SK-N-SH (cell line): ENCODE measurements at regions of chr4 and their contacts with region 1.

Region 1: GRCh38 chr4:116197317-116197809 is 888.0 kb downstream of the TRAM1L1 start:
- DNase-seq: no peak
- H3K4me3 ChIP-seq: no peak overlapping the region
- H3K27ac ChIP-seq: no peak overlapping the region
- H3K4me1 ChIP-seq: no peaks in the 10 kb centered on the region; a peak in 1 of 4 replicates
- H3K27me3 ChIP-seq: no peaks in the 10 kb centered on the region
- CTCF ChIP-seq: no peak
- EP300 ChIP-seq: no peak
- RAD21 ChIP-seq: no peak

Region 2: DNA sequence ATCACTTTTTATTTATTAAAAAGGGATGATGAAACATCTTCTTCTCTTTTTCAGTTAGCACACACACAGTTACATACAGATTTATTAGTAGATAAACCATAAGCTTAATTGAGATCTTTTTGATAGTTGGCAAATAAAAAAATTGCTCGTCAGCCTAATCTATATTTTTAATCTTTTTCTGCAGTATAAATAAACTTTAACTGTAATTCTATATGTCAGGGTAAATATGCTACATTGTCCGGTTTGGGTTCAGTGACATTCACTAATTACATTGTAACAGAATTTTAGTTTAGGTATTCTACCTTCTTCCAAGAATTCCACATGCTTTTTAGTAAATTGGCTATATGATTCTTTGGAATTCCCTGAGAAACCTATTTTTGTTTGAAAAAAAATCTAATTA is 401.2 kb before region 1 on chr4:
- CTCF ChIA-PET with region 1: no interaction called
- POLR2A ChIA-PET with region 1: no interaction called
- DNase-seq: no peak
- H3K4me3 ChIP-seq: no peak overlapping the region
- H3K27ac ChIP-seq: no peak overlapping the region
- H3K4me1 ChIP-seq: no peaks in the 10 kb centered on the region
- H3K27me3 ChIP-seq: no peaks in the 10 kb centered on the region
- CTCF ChIP-seq: no peak
- EP300 ChIP-seq: no peak
- RAD21 ChIP-seq: no peak

Region 3: DNA sequence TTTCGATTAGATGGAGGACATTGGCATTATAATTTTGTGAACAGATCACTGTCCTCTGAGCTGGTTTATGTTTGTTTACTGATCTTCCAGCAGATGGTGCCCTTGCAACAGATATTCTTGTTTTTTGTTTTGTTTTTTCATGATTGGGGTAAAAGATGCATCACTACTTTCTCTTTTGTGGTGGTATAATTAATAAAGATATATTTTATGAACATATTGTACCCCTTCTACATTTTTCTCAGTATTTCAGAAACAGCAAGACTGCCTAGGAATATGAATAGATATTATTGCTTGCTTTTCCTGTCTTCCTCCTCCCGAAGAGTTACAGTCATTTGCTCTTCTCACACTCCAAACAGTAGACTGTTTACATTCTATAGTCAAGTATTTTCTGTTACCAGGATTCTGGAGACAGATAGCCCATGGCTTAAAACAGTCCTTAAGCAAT is 17.2 kb before region 1 on chr4:
- CTCF ChIA-PET with region 1: interaction called, 10 read pairs
- POLR2A ChIA-PET with region 1: no interaction called
- DNase-seq: peak; percentile 24
- H3K4me3 ChIP-seq: peak overlapping the region in 1 of 2 experiments; percentile 46; a peak in 1 of 4 replicates
- H3K27ac ChIP-seq: no peak overlapping the region
- H3K4me1 ChIP-seq: peaks cover 0 to 9% of the 10 kb centered on the region in 2 experiments; a peak in 2 of 4 replicates
- H3K27me3 ChIP-seq: no peaks in the 10 kb centered on the region
- CTCF ChIP-seq: peak; percentile 62
- EP300 ChIP-seq: no peak
- RAD21 ChIP-seq: peak; percentile 86